H1 (cell line): ENCODE measurements at regions of chr3 and their contacts with region 1.

Region 1: GRCh38 chr3:112043603-112044201 is 9.2 kb downstream of the TMPRSS7 start:
- DNase-seq: peak in 1 of 2 experiments; percentile 5
- H3K4me3 ChIP-seq: no peak overlapping the region
- H3K27ac ChIP-seq: no peak overlapping the region
- H3K4me1 ChIP-seq: peaks cover 0 to 4% (median 1%) of the 10 kb centered on the region in 4 experiments; a peak in 4 of 7 replicates
- H3K27me3 ChIP-seq: no peaks in the 10 kb centered on the region
- CTCF ChIP-seq: peak; percentile 76 to 82 (median 79)
- EP300 ChIP-seq: no peak
- POLR2A ChIP-seq: no peak
- RAD21 ChIP-seq: peak; percentile 81 to 86

Region 2: DNA sequence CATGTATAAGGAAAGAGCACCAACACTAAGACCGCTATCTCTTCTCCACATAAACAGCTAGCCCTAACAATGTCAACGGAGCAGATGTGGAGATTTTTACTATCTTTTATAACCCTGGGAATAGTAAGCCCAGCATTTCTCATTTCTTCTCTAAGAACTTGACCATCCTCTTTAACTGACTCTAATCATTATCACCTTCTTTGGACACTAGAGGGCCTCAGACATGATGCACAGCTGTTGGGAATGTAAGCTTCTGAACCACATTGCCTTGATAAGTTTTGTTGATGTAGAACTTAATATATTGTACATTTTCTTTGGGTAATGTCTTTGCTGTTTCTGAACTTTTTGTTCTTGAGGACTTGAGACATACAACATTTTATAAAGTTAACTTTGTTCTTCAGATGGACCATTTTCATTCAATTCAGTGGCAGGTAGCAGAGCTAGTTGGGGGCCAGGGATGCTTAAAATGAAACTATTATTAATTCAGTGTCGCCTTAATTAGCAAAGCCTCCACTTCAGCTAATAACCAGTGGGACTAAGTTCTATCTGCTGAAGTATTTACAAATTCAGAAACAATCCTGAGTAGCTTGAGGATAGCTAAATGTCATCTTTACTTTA is 54.5 kb before region 1 on chr3:
- CTCF ChIA-PET with region 1: interaction called, 42 read pairs
- POLR2A ChIA-PET with region 1: no interaction called
- DNase-seq: no peak
- H3K4me3 ChIP-seq: no peak overlapping the region
- H3K27ac ChIP-seq: no peak overlapping the region
- H3K4me1 ChIP-seq: no peaks in the 10 kb centered on the region
- H3K27me3 ChIP-seq: no peaks in the 10 kb centered on the region
- CTCF ChIP-seq: peak in 2 of 3 experiments; percentile 64 to 75; a peak in 3 of 4 replicates
- EP300 ChIP-seq: no peak
- POLR2A ChIP-seq: no peak
- RAD21 ChIP-seq: peak; percentile 61 to 64

Region 3: GRCh38 chr3:111998636-111999483 is 44.8 kb before region 1 on chr3 and contains the start of gene TAGLN3:
- CTCF ChIA-PET with region 1: interaction called, 14 read pairs
- POLR2A ChIA-PET with region 1: interaction called, 5 read pairs
- DNase-seq: peak in 1 of 2 experiments; percentile 77
- H3K4me3 ChIP-seq: peak within 1 kb of the TSS; percentile 63 to 77 (median 72)
- H3K27ac ChIP-seq: 0 out of 2 replicates have a peak within 1 kb of the TSS, but pooled peaks have one; percentile 5
- H3K4me1 ChIP-seq: peaks cover 3 to 10% (median 6%) of the 10 kb centered on the region in 4 experiments; a peak in 5 of 7 replicates
- H3K27me3 ChIP-seq: peaks cover 0 to 22% (median 9%) of the 10 kb centered on the region in 4 experiments; a peak in 3 of 7 replicates
- CTCF ChIP-seq: no peak
- EP300 ChIP-seq: no peak
- POLR2A ChIP-seq: peak in 1 of 2 experiments; percentile 31; a peak in 2 of 3 replicates
- RAD21 ChIP-seq: no peak
- total RNA-seq, gene TAGLN3: 7.2 and 7.5 TPM in 2 replicates

Region 4: DNA sequence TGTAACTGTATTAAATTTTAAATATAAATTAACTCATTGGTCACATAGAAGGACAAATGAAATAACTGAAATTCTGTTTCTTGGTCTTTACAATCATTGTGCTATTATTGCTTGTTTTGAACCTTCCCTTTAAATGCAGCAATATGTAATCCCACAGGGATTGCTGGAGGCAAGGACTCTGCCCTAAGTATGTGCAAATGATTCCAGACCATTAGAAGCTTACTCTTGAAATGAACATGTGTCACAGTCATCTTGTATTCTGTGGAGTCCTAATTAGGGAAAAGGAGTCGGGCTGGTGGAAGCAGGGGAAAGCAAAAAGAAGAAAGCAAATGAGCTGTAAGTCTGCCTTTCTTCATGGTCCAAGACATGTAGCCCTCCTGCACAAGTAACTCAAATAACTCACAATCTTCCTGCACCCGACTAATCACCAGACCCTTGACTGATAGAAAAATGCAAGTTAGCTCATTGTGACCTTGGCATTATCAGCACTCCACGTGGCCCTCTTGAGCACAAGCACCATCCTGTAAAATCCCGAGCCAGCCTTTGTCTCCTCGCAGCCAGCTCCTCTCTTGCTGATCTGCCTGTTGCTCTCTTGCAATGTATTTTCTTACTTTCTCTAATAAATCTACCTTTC is 11.5 kb before region 1 on chr3:
- CTCF ChIA-PET with region 1: interaction called, 40 read pairs
- POLR2A ChIA-PET with region 1: no interaction called
- DNase-seq: no peak
- H3K4me3 ChIP-seq: no peak overlapping the region
- H3K27ac ChIP-seq: no peak overlapping the region
- H3K4me1 ChIP-seq: no peaks in the 10 kb centered on the region
- H3K27me3 ChIP-seq: no peaks in the 10 kb centered on the region
- CTCF ChIP-seq: no peak
- EP300 ChIP-seq: no peak
- POLR2A ChIP-seq: no peak
- RAD21 ChIP-seq: no peak

Region 5: GRCh38 chr3:112065774-112066173 is 22.1 kb after region 1 on chr3:
- CTCF ChIA-PET with region 1: interaction called, 10 read pairs
- POLR2A ChIA-PET with region 1: no interaction called
- DNase-seq: no peak
- H3K4me3 ChIP-seq: no peak overlapping the region
- H3K27ac ChIP-seq: no peak overlapping the region
- H3K4me1 ChIP-seq: no peaks in the 10 kb centered on the region
- H3K27me3 ChIP-seq: no peaks in the 10 kb centered on the region
- CTCF ChIP-seq: no peak
- EP300 ChIP-seq: no peak
- POLR2A ChIP-seq: no peak
- RAD21 ChIP-seq: no peak

Region 6: DNA sequence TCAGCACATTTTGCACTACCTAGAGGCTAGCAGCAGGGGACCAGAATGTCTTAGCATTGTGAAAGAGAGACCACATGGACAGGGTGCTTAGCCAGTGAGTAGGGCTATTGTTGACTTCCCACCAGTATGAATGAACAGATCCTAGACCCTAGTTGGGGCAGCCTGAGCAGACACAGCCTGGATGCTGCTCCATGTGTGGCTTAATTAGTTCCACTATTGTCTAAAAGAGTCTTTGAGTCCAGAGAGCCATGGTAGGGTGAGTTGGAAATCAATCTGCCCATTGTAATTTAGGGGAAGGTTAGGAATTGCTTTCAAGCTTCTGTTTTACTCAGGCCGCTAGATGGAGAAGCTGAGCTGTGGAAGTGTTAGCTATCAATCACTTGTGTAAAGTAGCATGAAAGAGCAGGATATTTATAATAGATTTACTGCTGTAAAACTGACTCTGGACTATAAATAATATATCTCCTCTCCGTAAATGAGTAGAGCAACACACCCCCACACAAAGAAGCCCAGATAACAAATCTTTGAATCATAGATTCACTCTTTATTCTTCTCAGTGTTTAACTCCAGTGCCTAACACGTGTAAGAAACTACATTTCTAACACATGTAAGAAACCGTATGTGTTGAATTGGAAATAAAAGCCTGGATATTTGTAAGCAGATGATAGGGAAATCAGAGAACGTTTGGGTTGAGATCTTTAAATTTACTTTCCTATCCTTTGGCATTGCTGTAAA is 93.4 kb after region 1 on chr3:
- CTCF ChIA-PET with region 1: no interaction called
- POLR2A ChIA-PET with region 1: no interaction called
- DNase-seq: peak; percentile 27 to 72
- H3K4me3 ChIP-seq: no peak overlapping the region; a peak in 1 of 8 replicates
- H3K27ac ChIP-seq: peak overlapping the region; percentile 49; the same call in 1 of the 2 replicates
- H3K4me1 ChIP-seq: peaks cover 1 to 8% (median 3%) of the 10 kb centered on the region in 4 experiments; a peak in 4 of 7 replicates
- H3K27me3 ChIP-seq: no peaks in the 10 kb centered on the region
- CTCF ChIP-seq: peak in 2 of 3 experiments; percentile 60 to 74; a peak in 3 of 4 replicates
- EP300 ChIP-seq: no peak
- POLR2A ChIP-seq: 0 out of 3 replicates have a peak, but pooled peaks of 1 of the 2 experiments have one; percentile 18
- RAD21 ChIP-seq: peak; percentile 84 to 87